GM12878 (cell line): ENCODE measurements at regions of chr17 and their contacts with region 1.

Region 1: DNA sequence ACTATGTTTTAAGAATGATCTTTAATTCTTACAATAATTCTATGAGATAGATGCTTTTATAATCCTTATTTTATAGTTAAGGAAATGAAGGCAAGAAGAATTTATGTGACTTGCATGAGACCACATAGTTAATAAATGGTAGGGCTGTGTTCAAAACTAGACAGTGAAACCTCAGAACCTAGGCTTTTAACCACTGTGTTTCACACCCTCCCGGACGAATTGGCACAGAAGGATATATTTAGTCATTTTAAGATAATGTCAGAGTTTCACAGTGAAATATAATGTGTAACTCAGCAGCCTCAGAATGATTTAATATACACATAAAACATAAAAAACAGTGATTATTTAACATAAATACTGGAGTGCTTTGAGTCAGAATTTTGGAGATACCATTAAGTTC is 57.0 kb downstream of the NSRP1 start:
- DNase-seq: peak; percentile 68
- ATAC-seq: peak; percentile 98
- H3K4me3 ChIP-seq: no peak overlapping the region
- H3K27ac ChIP-seq: peak overlapping the region; percentile 33; the same call in 1 of the 2 replicates
- H3K4me1 ChIP-seq: peaks cover 33% of the 10 kb centered on the region
- H3K27me3 ChIP-seq: no peaks in the 10 kb centered on the region
- CTCF ChIP-seq: no peak
- EP300 ChIP-seq: peak; percentile 67 to 93
- POLR2A ChIP-seq: no peak
- RAD21 ChIP-seq: no peak

Region 2: DNA sequence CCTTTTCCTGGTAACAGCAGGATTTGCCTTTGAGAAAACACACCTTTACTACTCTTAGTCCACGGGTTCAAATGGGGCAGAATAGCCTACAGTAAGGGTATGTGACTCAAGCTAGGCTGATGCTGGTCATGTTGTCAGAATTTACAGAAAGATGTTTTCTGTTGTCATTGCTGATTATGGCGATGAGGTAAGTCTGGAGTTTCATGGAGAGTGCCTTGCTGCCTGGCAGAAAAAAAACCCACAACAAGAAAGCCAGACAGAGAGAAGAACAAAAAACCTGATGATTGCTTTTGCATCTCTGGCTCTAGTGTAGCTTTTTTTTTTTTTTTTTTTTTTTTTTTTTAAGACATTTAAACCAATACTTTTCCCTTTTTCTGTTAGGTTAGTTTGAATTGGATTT is 13.9 kb after region 1 on chr17:
- CTCF ChIA-PET with region 1: interaction called, 5 read pairs
- POLR2A ChIA-PET with region 1: no interaction called
- RAD21 ChIA-PET with region 1: no interaction called
- SMC1A ChIA-PET with region 1: interaction called, 10 read pairs
- in situ Hi-C with region 1: no loop called
- intact Hi-C with region 1: no loop called
- DNase-seq: no peak
- ATAC-seq: no peak
- H3K4me3 ChIP-seq: no peak overlapping the region
- H3K27ac ChIP-seq: no peak overlapping the region
- H3K4me1 ChIP-seq: no peaks in the 10 kb centered on the region
- H3K27me3 ChIP-seq: no peaks in the 10 kb centered on the region
- CTCF ChIP-seq: no peak
- EP300 ChIP-seq: no peak
- POLR2A ChIP-seq: no peak
- RAD21 ChIP-seq: no peak

Region 3: DNA sequence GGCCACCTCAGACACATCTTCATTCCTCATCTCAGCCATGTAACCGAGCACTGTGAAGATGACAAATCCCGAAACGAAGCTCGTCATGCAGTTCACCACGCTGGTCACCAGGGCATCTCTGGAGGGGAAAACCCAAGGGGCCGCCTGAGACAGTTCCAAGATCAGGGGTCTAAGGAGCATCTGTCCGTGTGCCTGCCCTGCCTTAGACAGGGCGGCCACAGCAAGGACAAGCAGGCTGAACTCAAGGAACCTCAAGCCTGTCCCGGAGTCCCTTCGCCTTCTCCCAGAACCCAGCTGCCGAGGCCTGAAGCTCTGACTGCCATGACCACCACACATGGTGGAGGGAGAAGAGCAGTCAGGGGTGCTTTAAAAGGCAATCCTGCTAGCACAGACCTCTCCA is 39.1 kb after region 1 on chr17:
- CTCF ChIA-PET with region 1: interaction called, 7 read pairs
- POLR2A ChIA-PET with region 1: interaction called, 6 read pairs
- RAD21 ChIA-PET with region 1: interaction called, 4 read pairs
- SMC1A ChIA-PET with region 1: interaction called, 5 read pairs
- in situ Hi-C with region 1: no loop called
- intact Hi-C with region 1: loop called (anchors 2 kb)
- DNase-seq: peak; percentile 72
- ATAC-seq: peak; percentile 91
- H3K4me3 ChIP-seq: peak overlapping the region; percentile 19; the same call in 1 of the 2 replicates
- H3K27ac ChIP-seq: peak overlapping the region; percentile 85
- H3K4me1 ChIP-seq: peaks cover 36% of the 10 kb centered on the region
- H3K27me3 ChIP-seq: no peaks in the 10 kb centered on the region
- CTCF ChIP-seq: peak; percentile 0 to 47 (median 34); a peak in 3 of 6 replicates
- EP300 ChIP-seq: peak; percentile 32 to 50; a peak in 2 of 4 replicates
- POLR2A ChIP-seq: peak; percentile 49; the same call in 1 of the 2 replicates
- RAD21 ChIP-seq: 0 out of 2 replicates have a peak, but pooled peaks have one; percentile 29

Region 4: DNA sequence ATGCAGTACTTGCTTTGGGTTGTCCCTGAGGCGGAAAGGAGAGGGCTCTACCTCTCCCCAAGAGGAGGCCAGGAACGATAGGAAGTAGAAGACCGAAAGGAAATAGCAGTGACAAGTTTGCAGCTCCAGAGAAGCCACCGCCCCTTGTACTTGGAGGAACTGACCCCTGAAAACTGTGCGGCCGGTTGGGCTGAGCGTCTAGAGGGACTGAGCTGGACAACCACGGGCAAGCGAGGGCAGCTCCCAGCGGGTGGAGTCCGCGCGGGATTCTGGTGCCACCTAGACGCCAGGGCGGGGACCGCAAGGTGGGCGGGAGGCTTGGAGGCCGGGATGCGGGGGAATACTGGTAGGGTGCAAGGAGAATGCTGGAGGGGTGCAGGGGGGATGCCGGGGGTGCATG is 63.1 kb after region 1 on chr17:
- CTCF ChIA-PET with region 1: no interaction called
- POLR2A ChIA-PET with region 1: no interaction called
- RAD21 ChIA-PET with region 1: interaction called, 5 read pairs
- SMC1A ChIA-PET with region 1: interaction called, 12 read pairs
- in situ Hi-C with region 1: no loop called
- intact Hi-C with region 1: loop called (anchors 2 kb)
- DNase-seq: no peak
- ATAC-seq: peak; percentile 75
- H3K4me3 ChIP-seq: no peak overlapping the region
- H3K27ac ChIP-seq: no peak overlapping the region
- H3K4me1 ChIP-seq: peaks cover 29% of the 10 kb centered on the region
- H3K27me3 ChIP-seq: no peaks in the 10 kb centered on the region
- CTCF ChIP-seq: peak; percentile 38 to 70 (median 65)
- EP300 ChIP-seq: no peak
- POLR2A ChIP-seq: no peak
- RAD21 ChIP-seq: peak; percentile 80

Region 5: DNA sequence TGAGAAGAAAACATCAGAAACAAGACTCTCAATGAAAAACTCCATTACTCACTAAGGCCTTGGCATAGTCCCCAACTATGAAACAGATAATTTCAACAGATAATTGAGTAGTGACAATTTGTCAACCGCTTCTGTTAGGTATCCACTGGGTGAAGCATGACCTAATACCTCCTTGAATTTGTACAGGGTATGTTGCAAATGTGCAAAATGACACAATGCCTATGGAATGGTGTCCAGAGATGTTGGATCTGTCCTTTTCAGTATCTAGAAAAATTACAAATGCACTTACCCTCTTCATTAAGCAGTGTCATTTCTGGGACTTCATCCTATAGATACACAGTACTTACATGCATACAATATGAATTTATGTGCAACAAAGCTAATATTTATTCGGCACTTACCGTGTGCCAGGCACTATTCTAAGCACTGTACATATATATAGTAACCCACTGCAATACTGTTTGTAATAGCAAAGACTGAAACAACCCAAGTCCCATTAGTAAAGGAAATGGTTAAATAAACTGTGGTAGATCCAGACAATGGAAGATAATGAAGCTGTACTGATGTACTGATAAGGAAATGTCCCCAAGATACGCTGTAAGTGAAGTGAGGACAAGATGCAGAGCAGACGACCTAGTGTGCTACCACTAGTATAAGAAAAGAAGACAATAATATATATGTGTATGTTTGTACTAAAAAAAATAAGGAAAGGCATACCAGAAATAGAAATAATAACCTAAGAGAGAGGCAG is 83.3 kb after region 1 on chr17:
- CTCF ChIA-PET with region 1: no interaction called
- POLR2A ChIA-PET with region 1: no interaction called
- RAD21 ChIA-PET with region 1: no interaction called
- SMC1A ChIA-PET with region 1: no interaction called
- in situ Hi-C with region 1: no loop called
- intact Hi-C with region 1: no loop called
- DNase-seq: no peak
- ATAC-seq: no peak
- H3K4me3 ChIP-seq: no peak overlapping the region
- H3K27ac ChIP-seq: no peak overlapping the region
- H3K4me1 ChIP-seq: no peaks in the 10 kb centered on the region
- H3K27me3 ChIP-seq: no peaks in the 10 kb centered on the region
- CTCF ChIP-seq: no peak
- EP300 ChIP-seq: no peak
- POLR2A ChIP-seq: no peak
- RAD21 ChIP-seq: no peak

Region 6: GRCh38 chr17:30600049-30600829 is 426.6 kb after region 1 on chr17:
- CTCF ChIA-PET with region 1: no interaction called
- POLR2A ChIA-PET with region 1: no interaction called
- RAD21 ChIA-PET with region 1: no interaction called
- SMC1A ChIA-PET with region 1: no interaction called
- in situ Hi-C with region 1: no loop called
- intact Hi-C with region 1: loop called (anchors 10 kb)
- DNase-seq: peak; percentile 38
- ATAC-seq: peak; percentile 95
- H3K4me3 ChIP-seq: peak overlapping the region; percentile 98
- H3K27ac ChIP-seq: peak overlapping the region; percentile 81
- H3K4me1 ChIP-seq: no peaks in the 10 kb centered on the region; the same call in 1 of the 2 replicates
- H3K27me3 ChIP-seq: no peaks in the 10 kb centered on the region
- CTCF ChIP-seq: peak; percentile 47 to 66 (median 49)
- EP300 ChIP-seq: no peak
- POLR2A ChIP-seq: peak; percentile 92
- RAD21 ChIP-seq: no peak